Lower leg skin (tissue), 4 donors: ENCODE measurements at regions of chr6 and their contacts with region 1.

Region 1: DNA sequence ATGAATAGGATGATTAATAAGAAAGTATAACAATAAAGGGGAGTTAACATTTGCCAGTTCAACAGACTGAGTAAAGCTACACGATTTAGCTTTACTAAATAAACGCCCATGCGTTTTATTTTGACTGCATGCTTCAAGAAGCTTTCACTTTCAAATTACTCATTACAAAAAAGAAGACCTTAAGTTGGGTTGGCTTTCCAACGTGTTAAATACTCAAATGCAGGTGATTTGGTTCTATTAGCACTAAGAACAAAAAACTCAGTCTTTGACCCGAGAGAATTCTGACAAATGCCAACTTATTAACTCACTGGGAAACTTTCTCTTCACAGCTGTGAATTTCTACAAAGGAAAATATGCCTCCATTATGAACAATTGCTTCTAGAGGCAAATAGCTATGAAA is 24.8 kb downstream of the RNF146 start:
- DNase-seq: no peak
- H3K4me3 ChIP-seq: no peak overlapping the region
- CTCF ChIP-seq: no peak
- POLR2A ChIP-seq: no peak

Region 2: GRCh38 chr6:125377621-125378020 is 1913.9 kb before region 1 on chr6:
- intact Hi-C with region 1: no loop called
- DNase-seq: no peak
- H3K4me3 ChIP-seq: no peak overlapping the region
- CTCF ChIP-seq: no peak
- POLR2A ChIP-seq: no peak

Region 3: GRCh38 chr6:125844989-125845388 is 1446.5 kb before region 1 on chr6:
- intact Hi-C with region 1: no loop called
- DNase-seq: no peak
- H3K4me3 ChIP-seq: no peak overlapping the region
- CTCF ChIP-seq: no peak
- POLR2A ChIP-seq: no peak

Region 4: GRCh38 chr6:127279815-127280214 is 11.7 kb before region 1 on chr6:
- intact Hi-C with region 1: no loop called
- DNase-seq: no peak
- H3K4me3 ChIP-seq: no peak overlapping the region
- CTCF ChIP-seq: no peak
- POLR2A ChIP-seq: no peak

Region 5: GRCh38 chr6:127317388-127318128 is 26.1 kb after region 1 on chr6:
- intact Hi-C with region 1: no loop called
- DNase-seq: no peak
- H3K4me3 ChIP-seq: no peak overlapping the region
- CTCF ChIP-seq: no peak
- POLR2A ChIP-seq: no peak

Region 6: DNA sequence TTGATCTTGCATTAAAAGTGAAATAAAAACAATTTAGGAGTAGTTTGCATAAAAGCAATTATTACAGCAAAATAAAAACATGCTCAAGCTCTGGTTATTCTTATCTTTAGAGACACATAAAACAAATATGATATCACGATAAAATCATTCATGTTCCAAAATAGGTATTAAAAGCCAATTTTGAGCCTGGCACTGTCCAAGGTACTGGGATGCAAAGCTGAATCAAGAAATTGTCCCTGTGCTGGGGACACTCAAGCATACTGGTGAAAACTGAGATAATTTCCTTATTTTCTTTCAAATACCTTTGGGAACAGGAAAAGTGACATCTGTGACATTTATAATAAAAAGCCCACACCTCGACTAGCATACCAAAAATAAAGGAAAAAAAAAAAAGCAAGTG is 228.6 kb after region 1 on chr6:
- intact Hi-C with region 1: loop called (anchors 10 kb)
- DNase-seq: no peak
- H3K4me3 ChIP-seq: no peak overlapping the region
- CTCF ChIP-seq: no peak
- POLR2A ChIP-seq: no peak